Activated CD4-positive, alpha-beta T cell treated with anti-CD3 and anti-CD28 coated beads for 36 hours (primary cell): ENCODE measurements at regions of chr7 and their contacts with region 1.

Region 1: GRCh38 chr7:76166404-76167255 is 35.1 kb upstream of the SRRM3 start:
- DNase-seq: peak; percentile 97
- ATAC-seq: peak; percentile 90
- H3K4me3 Mint-ChIP-seq: peak overlapping the region; percentile 79
- H3K27ac Mint-ChIP-seq: peak overlapping the region; percentile 93
- H3K4me1 Mint-ChIP-seq: peaks cover 8% of the 10 kb centered on the region
- H3K27me3 Mint-ChIP-seq: no peaks in the 10 kb centered on the region

Region 2: GRCh38 chr7:75878769-75879611 is 287.6 kb before region 1 on chr7 and contains the start of gene RHBDD2:
- CTCF ChIA-PET with region 1: no interaction called
- POLR2A ChIA-PET with region 1: no interaction called
- intact Hi-C with region 1: loop called in 1 of 2 experiments (anchors 10 kb)
- DNase-seq: peak; percentile 99
- ATAC-seq: peak; percentile 97
- H3K4me3 Mint-ChIP-seq: peak within 1 kb of the TSS; percentile 100
- H3K27ac Mint-ChIP-seq: peak within 1 kb of the TSS; percentile 97
- H3K4me1 Mint-ChIP-seq: peaks cover 34% of the 10 kb centered on the region
- H3K27me3 Mint-ChIP-seq: no peaks in the 10 kb centered on the region
- total RNA-seq, gene RHBDD2: 21.6 to 23.2 TPM

Region 3: GRCh38 chr7:76179686-76180085 is 13.1 kb after region 1 on chr7:
- CTCF ChIA-PET with region 1: interaction called, 15 read pairs
- POLR2A ChIA-PET with region 1: no interaction called
- intact Hi-C with region 1: no loop called
- DNase-seq: no peak
- ATAC-seq: no peak
- H3K4me3 Mint-ChIP-seq: no peak overlapping the region
- H3K27ac Mint-ChIP-seq: no peak overlapping the region
- H3K4me1 Mint-ChIP-seq: no peaks in the 10 kb centered on the region
- H3K27me3 Mint-ChIP-seq: no peaks in the 10 kb centered on the region

Region 4: GRCh38 chr7:76201730-76202665 is 35.4 kb after region 1 on chr7 and contains the start of gene SRRM3:
- CTCF ChIA-PET with region 1: no interaction called
- POLR2A ChIA-PET with region 1: no interaction called
- intact Hi-C with region 1: loop called in 1 of 2 experiments (anchors 1 kb)
- DNase-seq: peak; percentile 92
- ATAC-seq: peak; percentile 92
- H3K4me3 Mint-ChIP-seq: no peak within 1 kb of the TSS
- H3K27ac Mint-ChIP-seq: no peak within 1 kb of the TSS
- H3K4me1 Mint-ChIP-seq: no peaks in the 10 kb centered on the region
- H3K27me3 Mint-ChIP-seq: peaks cover 14% of the 10 kb centered on the region
- total RNA-seq, gene SRRM3: 0.09 TPM in 1 of 2 experiments, not detected in the other

Region 5: GRCh38 chr7:76291343-76292212 is 124.9 kb after region 1 on chr7:
- CTCF ChIA-PET with region 1: no interaction called
- POLR2A ChIA-PET with region 1: no interaction called
- intact Hi-C with region 1: loop called in 1 of 2 experiments (anchors 1 kb)
- DNase-seq: peak; percentile 94
- ATAC-seq: peak; percentile 96
- H3K4me3 Mint-ChIP-seq: peak overlapping the region; percentile 20
- H3K27ac Mint-ChIP-seq: peak overlapping the region; percentile 94
- H3K4me1 Mint-ChIP-seq: peaks cover 12% of the 10 kb centered on the region
- H3K27me3 Mint-ChIP-seq: peaks cover 2% of the 10 kb centered on the region

Region 6: DNA sequence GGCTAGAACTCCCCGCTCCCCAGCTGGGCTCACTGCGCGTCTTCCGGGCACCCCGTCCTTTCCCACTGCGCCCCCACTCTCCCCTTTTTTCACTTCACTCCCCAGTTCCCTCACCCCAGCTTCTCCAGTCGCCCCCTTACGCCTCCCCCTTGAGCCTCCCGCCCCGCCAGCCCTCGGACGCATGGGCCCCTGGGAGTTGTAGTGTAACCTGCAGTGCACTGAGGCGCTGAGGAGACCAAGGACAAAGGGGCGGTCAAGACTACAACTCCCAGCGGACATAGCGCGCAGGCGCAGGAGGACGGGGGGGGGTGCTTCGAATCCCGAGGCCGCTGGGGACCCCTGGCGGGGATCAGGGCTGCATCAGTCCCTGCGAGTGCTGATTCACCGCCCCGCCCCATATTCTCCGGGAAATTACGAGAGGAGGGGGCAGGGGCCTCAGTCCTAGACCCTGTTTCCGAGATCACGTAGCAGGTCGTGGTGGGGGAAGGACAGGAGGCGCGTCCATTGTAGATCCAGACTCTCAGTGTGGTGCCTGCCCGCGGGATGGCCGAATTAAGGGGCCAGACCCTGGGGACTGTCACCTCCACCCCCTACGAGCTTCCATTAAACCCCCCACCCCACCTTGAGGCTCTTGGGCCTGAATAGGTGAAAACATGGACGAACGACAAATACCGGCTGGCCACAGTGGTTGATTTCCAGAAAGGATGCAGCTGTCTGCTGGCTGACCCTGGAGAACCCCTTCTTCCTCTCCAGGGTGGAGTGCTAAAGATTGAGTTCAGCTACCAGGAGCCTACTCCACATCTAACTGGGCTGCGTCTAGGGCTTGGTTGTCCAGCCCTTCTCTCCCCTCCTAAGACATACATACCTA is 192.7 kb after region 1 on chr7:
- CTCF ChIA-PET with region 1: interaction called, 3 read pairs
- POLR2A ChIA-PET with region 1: no interaction called
- intact Hi-C with region 1: loop called (anchors 1 to 2 kb)
- DNase-seq: peak; percentile 98
- ATAC-seq: peak; percentile 96
- H3K4me3 Mint-ChIP-seq: peak overlapping the region; percentile 99
- H3K27ac Mint-ChIP-seq: peak overlapping the region; percentile 96
- H3K4me1 Mint-ChIP-seq: peaks cover 41% of the 10 kb centered on the region
- H3K27me3 Mint-ChIP-seq: no peaks in the 10 kb centered on the region

Region 7: DNA sequence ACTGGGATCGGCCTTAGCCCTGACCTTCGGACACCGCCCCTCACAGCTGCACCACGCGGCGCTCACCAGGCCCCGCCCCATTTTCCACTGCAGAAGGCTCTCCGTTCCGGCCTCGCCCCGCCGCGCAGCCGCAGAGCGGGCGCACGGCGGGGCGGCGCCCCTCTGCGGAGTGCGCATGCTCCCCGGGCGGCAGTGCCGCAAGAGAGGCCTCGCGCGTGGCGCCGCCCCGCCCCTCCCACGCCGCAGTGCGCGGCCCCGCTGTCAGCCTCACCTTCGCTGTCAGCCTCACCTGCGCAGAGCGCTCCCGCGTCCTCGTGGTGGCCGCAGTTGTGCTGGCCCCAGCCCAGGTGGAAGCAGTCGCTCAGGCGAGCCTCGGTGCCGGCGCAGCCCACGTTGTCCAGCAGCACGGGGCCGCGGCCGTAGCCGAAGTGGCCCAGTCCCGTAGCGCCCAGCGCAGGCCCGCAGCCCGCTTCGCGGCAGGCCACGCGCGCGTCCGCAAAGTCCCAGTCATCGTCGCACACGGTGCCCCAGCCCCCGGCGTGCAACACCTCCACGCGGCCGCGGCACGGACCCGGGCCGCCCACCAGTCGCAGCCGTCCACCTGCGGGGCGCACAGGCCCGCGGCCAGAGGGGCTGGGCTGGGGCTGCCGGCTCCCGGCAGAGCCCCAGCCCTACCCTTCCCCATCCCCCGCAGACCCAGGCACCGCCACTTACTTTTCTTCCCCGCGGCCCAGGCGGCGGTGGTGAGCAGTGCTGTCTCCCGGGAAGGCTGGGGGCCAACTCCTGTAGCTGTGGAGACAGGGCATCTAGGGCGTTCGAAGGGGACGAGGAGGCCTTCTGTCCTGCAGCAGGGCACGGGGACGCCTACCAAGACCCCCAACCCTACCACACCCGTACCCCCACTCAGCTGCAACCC is 226.7 kb after region 1 on chr7:
- CTCF ChIA-PET with region 1: no interaction called
- POLR2A ChIA-PET with region 1: no interaction called
- intact Hi-C with region 1: loop called in 1 of 2 experiments (anchors 1 kb)
- DNase-seq: peak; percentile 94
- ATAC-seq: peak; percentile 85
- H3K4me3 Mint-ChIP-seq: peak overlapping the region; percentile 76
- H3K27ac Mint-ChIP-seq: peak overlapping the region; percentile 98
- H3K4me1 Mint-ChIP-seq: peaks cover 22% of the 10 kb centered on the region
- H3K27me3 Mint-ChIP-seq: no peaks in the 10 kb centered on the region